ENCODE measurements at regions of chr13 and their contacts with region 1.

Region 1: GRCh38 chr13:32577032-32577431 is 9.2 kb upstream of the PDS5B start:
- DNase-seq: no peak
- H3K4me3 ChIP-seq: no peak overlapping the region
- H3K27ac ChIP-seq: no peak overlapping the region
- H3K4me1 ChIP-seq: no peaks in the 10 kb centered on the region
- H3K27me3 ChIP-seq: no peaks in the 10 kb centered on the region
- CTCF ChIP-seq: no peak
- POLR2A ChIP-seq: no peak

Region 2: DNA sequence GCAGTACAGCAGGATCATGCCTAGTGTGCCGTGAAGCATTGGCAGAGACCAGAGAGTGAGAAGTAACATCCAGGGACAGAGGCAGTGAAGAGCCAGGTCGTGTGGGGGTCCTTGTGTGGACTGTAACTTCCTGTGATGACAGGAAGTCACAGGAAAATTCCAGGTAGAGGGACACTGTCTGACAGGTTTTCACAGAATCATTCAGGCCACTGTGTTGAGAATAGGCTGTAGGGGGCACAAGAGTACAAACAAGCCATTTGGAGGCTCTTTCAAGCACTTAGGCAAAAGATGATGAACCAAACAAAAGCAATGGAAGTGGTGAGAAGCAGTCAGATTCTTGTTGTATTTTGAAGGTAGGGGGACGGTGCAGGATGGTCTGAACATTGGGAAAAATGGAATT is 195.5 kb before region 1 on chr13:
- intact Hi-C with region 1: loop called (anchors 10 kb)
- DNase-seq: peak; percentile 30 to 36
- H3K4me3 ChIP-seq: no peak overlapping the region
- H3K27ac ChIP-seq: no peak overlapping the region
- H3K4me1 ChIP-seq: no peaks in the 10 kb centered on the region
- H3K27me3 ChIP-seq: no peaks in the 10 kb centered on the region
- CTCF ChIP-seq: peak in 5 of 6 experiments; percentile 12 to 79 (median 68)
- POLR2A ChIP-seq: no peak